CD8-positive, alpha-beta memory T cell (primary cell): ENCODE measurements at regions of chr19 and their contacts with region 1.

Region 1: DNA sequence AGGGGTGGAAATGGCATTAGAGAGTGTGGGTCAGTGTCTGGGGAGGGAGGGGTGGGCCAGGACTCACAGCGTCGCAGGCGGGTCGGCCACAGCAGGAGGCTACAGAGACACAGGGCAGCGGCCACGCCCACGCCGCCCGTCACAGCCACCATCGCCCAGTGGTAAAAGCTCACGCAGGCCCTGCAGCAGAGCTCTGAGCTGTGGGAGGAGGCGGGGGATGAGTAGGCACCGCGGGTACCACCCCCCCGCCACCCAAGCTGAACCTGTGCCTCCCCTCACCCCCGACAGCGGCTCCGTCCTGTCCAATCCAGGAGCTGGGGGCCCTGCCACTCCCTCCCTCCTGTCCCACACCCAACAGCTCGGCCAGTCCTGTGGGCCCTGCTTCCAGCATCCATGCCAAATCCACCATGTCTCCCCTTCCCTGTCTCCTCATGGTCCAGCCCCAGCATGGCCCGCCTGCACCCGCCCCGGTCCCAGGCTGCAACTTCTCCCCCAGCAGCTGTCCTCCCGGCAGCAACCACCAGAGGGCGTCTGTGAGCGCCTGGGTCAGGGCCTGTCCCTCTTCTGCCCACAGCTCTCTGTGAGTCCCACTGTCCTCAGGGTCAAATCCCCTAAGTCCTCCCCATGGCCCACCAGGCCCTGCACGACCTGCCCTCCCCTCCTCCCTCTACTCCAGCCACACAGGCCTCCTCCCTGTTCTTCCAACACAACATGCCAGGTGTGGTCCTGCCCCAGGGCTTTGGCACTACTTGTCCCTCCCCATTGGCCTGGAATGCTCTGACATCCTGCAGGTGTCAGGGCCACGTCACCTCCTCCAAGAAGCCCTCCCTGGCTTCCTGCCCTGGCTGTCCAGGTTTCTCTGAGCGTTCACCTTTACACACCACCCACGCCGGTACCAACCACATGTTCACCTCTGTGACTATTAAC is 6.0 kb downstream of the TEKTIP1 start:
- DNase-seq: peak; percentile 63 to 81 (median 72)
- H3K4me3 ChIP-seq: no peak overlapping the region
- H3K4me3 Mint-ChIP-seq: no peak overlapping the region
- H3K27ac ChIP-seq: no peak overlapping the region
- H3K27ac Mint-ChIP-seq: peak overlapping the region; percentile 47 to 86 (median 70)
- H3K4me1 ChIP-seq: no peaks in the 10 kb centered on the region
- H3K4me1 Mint-ChIP-seq: peaks cover 5 to 12% (median 8%) of the 10 kb centered on the region in 3 donors
- H3K27me3 ChIP-seq: no peaks in the 10 kb centered on the region
- H3K27me3 Mint-ChIP-seq: no peaks in the 10 kb centered on the region

Region 2: GRCh38 chr19:3557461-3558248 is 12.7 kb after region 1 on chr19 and contains the start of gene MFSD12:
- CTCF ChIA-PET with region 1: interaction called, 62 read pairs
- POLR2A ChIA-PET with region 1: interaction called, 14 read pairs
- DNase-seq: peak; percentile 91 to 95 (median 92)
- H3K4me3 ChIP-seq: peak within 1 kb of the TSS; percentile 96
- H3K4me3 Mint-ChIP-seq: peak within 1 kb of the TSS; percentile 93 to 98 (median 95)
- H3K27ac ChIP-seq: peak within 1 kb of the TSS; percentile 72
- H3K27ac Mint-ChIP-seq: peak within 1 kb of the TSS; percentile 91 to 99 (median 95)
- H3K4me1 ChIP-seq: peaks cover 43% of the 10 kb centered on the region
- H3K4me1 Mint-ChIP-seq: peaks cover 32 to 38% (median 35%) of the 10 kb centered on the region in 3 donors
- H3K27me3 ChIP-seq: no peaks in the 10 kb centered on the region
- H3K27me3 Mint-ChIP-seq: no peaks in the 10 kb centered on the region
- total RNA-seq, gene MFSD12: 114 to 119 TPM

Region 3: GRCh38 chr19:3762501-3763459 is 217.8 kb after region 1 on chr19 and contains the start of gene MRPL54:
- CTCF ChIA-PET with region 1: no interaction called
- POLR2A ChIA-PET with region 1: no interaction called
- DNase-seq: peak; percentile 98 to 100 (median 100)
- H3K4me3 ChIP-seq: peak within 1 kb of the TSS; percentile 98
- H3K4me3 Mint-ChIP-seq: peak within 1 kb of the TSS; percentile 96 to 99 (median 98)
- H3K27ac ChIP-seq: peak within 1 kb of the TSS; percentile 100
- H3K27ac Mint-ChIP-seq: peak within 1 kb of the TSS; percentile 100
- H3K4me1 ChIP-seq: peaks cover 45% of the 10 kb centered on the region
- H3K4me1 Mint-ChIP-seq: peaks cover 38 to 62% (median 42%) of the 10 kb centered on the region in 3 donors
- H3K27me3 ChIP-seq: no peaks in the 10 kb centered on the region
- H3K27me3 Mint-ChIP-seq: peaks cover 0 to 7% of the 10 kb centered on the region in 2 donors
- total RNA-seq, gene MRPL54: 85.0 to 95.3 TPM